ENCODE measurements at regions of chr4 and their contacts with region 1.

Region 1: GRCh38 chr4:139279760-139280620 is at the start of gene MGARP:
- DNase-seq: peak in 3 of 5 donors; percentile 26 to 61 (median 33)
- ATAC-seq: peak; percentile 43 to 83 (median 76)
- H3K4me3 ChIP-seq: peak within 1 kb of the TSS; percentile 31 to 63 (median 54)
- H3K27ac ChIP-seq: peak within 1 kb of the TSS in 2 of 12 donors; percentile 8
- H3K4me1 ChIP-seq: peaks cover 0 to 18% (median 6%) of the 10 kb centered on the region in 12 donors
- H3K27me3 ChIP-seq: peaks cover 0 to 44% (median 10%) of the 10 kb centered on the region in 9 donors
- CTCF ChIP-seq: no peak
- POLR2A ChIP-seq: no peak
- total RNA-seq, gene MGARP: 0.48 to 7.8 (median 0.98) TPM

Region 2: DNA sequence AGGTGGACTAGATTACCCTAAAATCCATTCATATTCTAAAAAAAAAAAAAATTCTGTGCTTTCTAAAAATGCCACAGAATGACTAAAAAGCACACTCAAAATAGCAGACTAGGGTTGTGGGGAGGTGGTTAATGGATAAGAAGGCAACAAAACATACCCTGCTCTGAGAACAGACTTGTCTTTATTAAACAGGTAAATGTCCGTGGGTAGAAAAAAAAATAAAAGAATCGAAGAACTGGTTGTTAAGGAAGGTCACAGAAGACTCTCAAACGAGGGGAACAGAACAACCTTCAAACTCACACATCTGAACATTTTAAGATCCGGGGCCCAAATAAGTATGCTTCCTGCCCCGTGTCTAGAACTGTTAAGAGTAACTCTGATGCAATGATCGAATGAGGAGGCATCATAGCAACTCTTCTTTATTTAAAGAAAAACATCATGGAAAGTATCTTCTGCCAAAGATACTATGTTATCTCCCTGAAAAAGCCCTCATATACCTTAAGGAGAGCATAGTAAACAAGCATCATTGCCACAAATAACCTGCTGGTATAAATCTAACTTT is 171.3 kb before region 1 on chr4:
- intact Hi-C with region 1: loop called in 1 of 10 experiments (anchors 10 kb)
- DNase-seq: no peak
- ATAC-seq: no peak
- H3K4me3 ChIP-seq: no peak overlapping the region
- H3K27ac ChIP-seq: no peak overlapping the region
- H3K4me1 ChIP-seq: peaks cover 0 to 9% (median 0%) of the 10 kb centered on the region in 12 donors
- H3K27me3 ChIP-seq: no peaks in the 10 kb centered on the region
- CTCF ChIP-seq: no peak
- POLR2A ChIP-seq: no peak

Region 3: DNA sequence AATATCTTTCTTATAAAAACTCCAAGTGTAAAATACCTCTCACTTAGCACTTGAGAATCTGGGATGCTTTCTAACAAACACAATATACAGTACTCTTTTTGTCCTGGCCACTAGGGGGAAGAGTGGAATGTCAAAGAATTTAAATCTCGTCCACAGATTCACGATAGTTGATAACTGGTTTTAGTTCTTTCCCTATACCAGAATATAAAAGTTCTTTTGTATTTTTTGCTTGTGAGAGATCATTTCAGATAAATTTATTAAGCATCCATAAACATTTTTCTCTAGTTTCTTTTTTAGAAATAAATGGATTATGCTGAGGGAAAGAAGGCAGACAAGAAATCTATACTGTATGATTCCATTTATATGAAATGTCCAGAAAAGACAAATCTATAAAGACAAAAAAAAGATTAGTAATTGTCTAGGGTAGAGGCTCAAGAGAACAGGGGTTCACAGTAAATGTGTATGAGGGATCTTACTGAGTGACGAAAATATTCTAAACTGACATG is 50.4 kb before region 1 on chr4:
- intact Hi-C with region 1: loop called in 2 of 10 experiments (anchors 5 to 10 kb)
- DNase-seq: no peak
- ATAC-seq: peak in 2 of 4 donors; percentile 60 to 67
- H3K4me3 ChIP-seq: no peak overlapping the region
- H3K27ac ChIP-seq: no peak overlapping the region
- H3K4me1 ChIP-seq: no peaks in the 10 kb centered on the region
- H3K27me3 ChIP-seq: no peaks in the 10 kb centered on the region
- CTCF ChIP-seq: peak; percentile 53 to 78 (median 67)
- POLR2A ChIP-seq: no peak